Psoas muscle (tissue), 8 donors: ENCODE measurements at regions of chr11 and their contacts with region 1.

Region 1: DNA sequence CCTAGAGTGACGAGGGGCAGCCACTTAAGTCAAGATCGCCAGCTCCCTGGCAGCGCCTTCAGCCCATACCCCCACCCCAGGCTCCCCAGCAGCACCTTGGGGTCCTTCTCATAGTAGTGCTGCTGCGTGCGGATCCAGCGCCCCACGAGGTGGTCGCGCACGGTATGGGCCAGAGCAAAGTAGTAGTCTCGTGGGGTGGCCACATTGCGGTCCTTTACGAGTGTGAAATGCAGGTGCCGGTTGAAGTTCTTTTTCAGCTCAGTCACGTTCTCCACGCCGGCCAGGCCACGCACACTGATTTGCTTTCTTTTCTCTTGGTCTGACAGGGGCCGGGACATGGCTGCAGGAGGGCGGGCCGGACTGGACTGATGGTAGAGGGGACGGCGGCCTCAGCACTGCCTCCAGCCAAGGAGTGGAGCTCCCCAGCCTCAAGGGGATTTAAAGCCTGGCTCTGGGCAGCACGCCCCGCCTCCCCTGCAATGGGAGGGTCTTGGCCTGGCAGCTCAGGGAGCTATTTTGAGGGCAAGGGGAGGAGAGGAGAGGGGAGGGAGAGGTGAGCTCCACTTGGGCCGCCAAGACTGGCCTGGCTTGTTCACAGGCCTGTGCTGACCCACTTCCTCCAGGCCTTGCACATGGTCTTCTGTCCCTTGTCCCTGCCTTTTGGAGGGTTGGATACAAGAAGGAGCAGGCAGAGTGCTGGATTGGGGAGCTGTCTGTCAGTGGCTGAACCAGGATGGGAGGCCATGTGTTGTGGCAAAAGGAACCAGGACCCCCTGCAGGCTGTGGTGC is at the start of gene PYGM:
- DNase-seq: peak; percentile 87 to 94
- ATAC-seq: peak; percentile 70 to 74 (median 72)
- H3K4me3 ChIP-seq: peak within 1 kb of the TSS; percentile 74
- H3K27ac ChIP-seq: peak within 1 kb of the TSS; percentile 85
- H3K4me1 ChIP-seq: peaks cover 94% of the 10 kb centered on the region
- H3K27me3 ChIP-seq: no peaks in the 10 kb centered on the region
- CTCF ChIP-seq: no peak
- total RNA-seq, gene PYGM: 1,536 to 2,203 (median 1,794) TPM

Region 2: DNA sequence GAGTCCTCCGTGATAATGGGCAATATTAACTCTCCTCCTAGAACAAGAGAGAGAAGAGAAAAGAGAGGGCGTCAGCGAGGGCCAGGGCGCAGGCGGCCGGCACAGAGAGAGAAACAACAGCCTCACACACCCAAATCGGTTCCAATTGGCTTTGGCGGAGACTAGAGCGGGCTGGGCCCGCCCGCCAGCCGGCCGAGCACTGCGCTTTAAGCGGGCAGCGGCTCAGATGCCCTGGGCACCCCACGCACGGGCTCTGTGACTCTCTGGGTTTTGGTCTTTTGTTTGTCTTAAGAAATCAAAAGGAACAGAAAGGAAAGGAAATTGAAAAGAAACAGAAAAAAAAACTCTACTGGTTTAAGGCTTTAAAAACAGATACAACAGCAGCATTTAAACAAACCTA is 151.7 kb before region 1 on chr11:
- intact Hi-C with region 1: no loop called
- DNase-seq: no peak
- ATAC-seq: peak in 2 of 4 donors; percentile 53
- H3K4me3 ChIP-seq: peak overlapping the region; percentile 25
- H3K27ac ChIP-seq: no peak overlapping the region
- H3K4me1 ChIP-seq: no peaks in the 10 kb centered on the region
- H3K27me3 ChIP-seq: peaks cover 0 to 20% (median 4%) of the 10 kb centered on the region in 3 donors
- CTCF ChIP-seq: no peak

Region 3: DNA sequence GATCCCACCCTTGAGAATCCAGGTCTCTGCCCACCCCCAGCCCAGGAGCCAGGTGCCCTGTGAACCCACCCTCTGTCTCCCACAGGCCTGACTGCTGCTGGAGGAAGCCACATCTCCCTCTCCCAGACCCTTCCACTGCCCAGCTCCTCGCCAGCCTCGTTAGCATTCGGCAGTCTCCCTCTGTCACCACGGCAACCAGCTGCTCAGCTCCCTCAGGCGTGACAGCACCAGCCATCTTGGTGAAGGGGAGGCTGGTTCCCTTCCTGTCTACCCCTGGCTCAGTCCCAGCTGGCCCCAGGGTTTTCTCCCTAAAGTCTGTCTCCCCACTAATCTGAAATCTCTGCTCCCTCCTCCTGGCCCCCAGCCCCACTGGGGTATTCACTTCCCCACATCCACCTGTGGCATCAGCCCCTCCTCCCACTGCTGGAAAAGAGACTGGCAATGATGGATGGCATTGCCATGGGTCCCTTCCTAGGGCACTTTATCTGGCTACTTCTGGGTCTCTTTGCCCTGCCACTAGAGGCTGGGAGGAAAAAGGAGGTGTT is 64.9 kb before region 1 on chr11:
- intact Hi-C with region 1: no loop called
- DNase-seq: no peak
- ATAC-seq: no peak
- H3K4me3 ChIP-seq: no peak overlapping the region
- H3K27ac ChIP-seq: no peak overlapping the region
- H3K4me1 ChIP-seq: no peaks in the 10 kb centered on the region
- H3K27me3 ChIP-seq: no peaks in the 10 kb centered on the region
- CTCF ChIP-seq: no peak

Region 4: DNA sequence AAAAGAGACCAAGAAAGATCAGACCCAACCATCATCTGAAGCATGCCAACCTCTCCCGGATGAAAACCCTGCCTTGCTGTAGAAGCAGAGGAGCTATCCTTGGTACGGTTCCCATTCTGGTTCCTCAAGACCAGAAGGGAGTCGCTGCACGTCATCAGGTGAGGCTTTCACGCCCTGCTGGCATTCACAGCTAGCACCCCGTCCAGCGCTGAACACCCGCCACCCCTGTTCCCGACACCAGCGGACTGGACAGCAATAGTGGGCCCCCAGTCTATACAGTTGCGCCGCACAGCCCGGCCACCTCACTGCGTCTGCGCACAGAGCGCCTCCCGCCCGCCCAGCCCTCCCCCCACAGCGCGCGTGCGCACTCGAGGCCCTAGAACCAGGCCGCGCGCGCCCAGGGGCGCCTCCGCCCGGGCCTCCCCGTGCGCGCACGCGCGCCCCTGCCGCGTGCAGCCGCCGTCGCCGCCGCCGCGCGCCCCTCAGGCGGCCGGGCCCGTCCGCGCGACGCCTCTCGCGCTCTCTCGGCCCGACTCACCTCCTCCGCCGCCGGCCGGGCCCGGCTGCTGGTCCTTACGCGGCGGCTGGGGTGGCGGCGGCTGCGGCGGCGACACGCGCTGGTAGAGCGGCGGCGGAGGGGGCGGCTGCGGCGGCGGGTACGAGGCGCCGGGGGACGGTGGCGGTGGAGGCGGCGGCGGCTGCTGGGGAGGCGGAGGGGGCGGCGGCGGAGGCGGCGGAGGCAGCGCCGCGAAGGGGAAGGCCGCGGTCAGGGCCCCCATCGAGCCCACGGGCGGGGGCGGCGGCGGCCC is 17.9 kb after region 1 on chr11:
- intact Hi-C with region 1: loop called in 1 of 2 experiments (anchors 2 kb)
- DNase-seq: peak; percentile 86 to 93
- ATAC-seq: peak; percentile 26 to 51 (median 41)
- H3K4me3 ChIP-seq: peak overlapping the region; percentile 87
- H3K27ac ChIP-seq: peak overlapping the region; percentile 98
- H3K4me1 ChIP-seq: peaks cover 50% of the 10 kb centered on the region
- H3K27me3 ChIP-seq: no peaks in the 10 kb centered on the region
- CTCF ChIP-seq: no peak